CD8-positive, alpha-beta T cell (primary cell): ENCODE measurements at regions of chr3 and their contacts with region 1.

Region 1: GRCh38 chr3:138594150-138594934 is at the start of gene CEP70:
- DNase-seq: peak; percentile 83 to 96 (median 91)
- ATAC-seq: peak; percentile 93
- H3K4me3 ChIP-seq: peak within 1 kb of the TSS; percentile 83 to 93
- H3K4me3 Mint-ChIP-seq: peak within 1 kb of the TSS; percentile 94
- H3K27ac ChIP-seq: peak within 1 kb of the TSS; percentile 90 to 95
- H3K27ac Mint-ChIP-seq: peak within 1 kb of the TSS; percentile 99
- H3K4me1 ChIP-seq: no peaks in the 10 kb centered on the region
- H3K4me1 Mint-ChIP-seq: peaks cover 14% of the 10 kb centered on the region
- H3K27me3 ChIP-seq: no peaks in the 10 kb centered on the region
- H3K27me3 Mint-ChIP-seq: no peaks in the 10 kb centered on the region
- CTCF ChIP-seq: peak; percentile 86
- total RNA-seq, gene CEP70: 29.5 to 31.0 TPM

Region 2: GRCh38 chr3:138068579-138069174 is 525.7 kb before region 1 on chr3:
- CTCF ChIA-PET with region 1: no interaction called
- POLR2A ChIA-PET with region 1: no interaction called
- intact Hi-C with region 1: no loop called
- DNase-seq: peak; percentile 53 to 80 (median 68)
- ATAC-seq: peak; percentile 79
- H3K4me3 ChIP-seq: no peak overlapping the region
- H3K4me3 Mint-ChIP-seq: no peak overlapping the region
- H3K27ac ChIP-seq: no peak overlapping the region
- H3K27ac Mint-ChIP-seq: no peak overlapping the region
- H3K4me1 ChIP-seq: no peaks in the 10 kb centered on the region
- H3K4me1 Mint-ChIP-seq: no peaks in the 10 kb centered on the region
- H3K27me3 ChIP-seq: no peaks in the 10 kb centered on the region
- H3K27me3 Mint-ChIP-seq: peaks cover 9% of the 10 kb centered on the region
- CTCF ChIP-seq: peak; percentile 79

Region 3: GRCh38 chr3:138186803-138187295 is 407.5 kb before region 1 on chr3:
- CTCF ChIA-PET with region 1: no interaction called
- POLR2A ChIA-PET with region 1: interaction called, 4 read pairs
- intact Hi-C with region 1: loop called (anchors 2 to 5 kb)
- DNase-seq: peak; percentile 79 to 95 (median 89)
- ATAC-seq: peak; percentile 95
- H3K4me3 ChIP-seq: peak overlapping the region; percentile 94
- H3K4me3 Mint-ChIP-seq: peak overlapping the region; percentile 97
- H3K27ac ChIP-seq: peak overlapping the region; percentile 90 to 92
- H3K27ac Mint-ChIP-seq: peak overlapping the region; percentile 98
- H3K4me1 ChIP-seq: peaks cover 29% of the 10 kb centered on the region
- H3K4me1 Mint-ChIP-seq: peaks cover 40% of the 10 kb centered on the region
- H3K27me3 ChIP-seq: peaks cover 0 to 3% of the 10 kb centered on the region in 2 experiments
- H3K27me3 Mint-ChIP-seq: peaks cover 5% of the 10 kb centered on the region
- CTCF ChIP-seq: no peak

Region 4: GRCh38 chr3:138608322-138609135 is 14.2 kb after region 1 on chr3 and contains the start of gene FAIM:
- CTCF ChIA-PET with region 1: interaction called, 24 read pairs
- POLR2A ChIA-PET with region 1: interaction called, 32 read pairs
- intact Hi-C with region 1: loop called (anchors 1 kb)
- DNase-seq: peak; percentile 52 to 84 (median 70)
- ATAC-seq: peak; percentile 76
- H3K4me3 ChIP-seq: peak within 1 kb of the TSS; percentile 71 to 83
- H3K4me3 Mint-ChIP-seq: peak within 1 kb of the TSS; percentile 86
- H3K27ac ChIP-seq: peak within 1 kb of the TSS; percentile 84 to 86
- H3K27ac Mint-ChIP-seq: peak within 1 kb of the TSS; percentile 96
- H3K4me1 ChIP-seq: peaks cover 14% of the 10 kb centered on the region
- H3K4me1 Mint-ChIP-seq: peaks cover 15% of the 10 kb centered on the region
- H3K27me3 ChIP-seq: no peaks in the 10 kb centered on the region
- H3K27me3 Mint-ChIP-seq: no peaks in the 10 kb centered on the region
- CTCF ChIP-seq: no peak
- total RNA-seq, gene FAIM: 2.0 to 2.6 TPM

Region 5: DNA sequence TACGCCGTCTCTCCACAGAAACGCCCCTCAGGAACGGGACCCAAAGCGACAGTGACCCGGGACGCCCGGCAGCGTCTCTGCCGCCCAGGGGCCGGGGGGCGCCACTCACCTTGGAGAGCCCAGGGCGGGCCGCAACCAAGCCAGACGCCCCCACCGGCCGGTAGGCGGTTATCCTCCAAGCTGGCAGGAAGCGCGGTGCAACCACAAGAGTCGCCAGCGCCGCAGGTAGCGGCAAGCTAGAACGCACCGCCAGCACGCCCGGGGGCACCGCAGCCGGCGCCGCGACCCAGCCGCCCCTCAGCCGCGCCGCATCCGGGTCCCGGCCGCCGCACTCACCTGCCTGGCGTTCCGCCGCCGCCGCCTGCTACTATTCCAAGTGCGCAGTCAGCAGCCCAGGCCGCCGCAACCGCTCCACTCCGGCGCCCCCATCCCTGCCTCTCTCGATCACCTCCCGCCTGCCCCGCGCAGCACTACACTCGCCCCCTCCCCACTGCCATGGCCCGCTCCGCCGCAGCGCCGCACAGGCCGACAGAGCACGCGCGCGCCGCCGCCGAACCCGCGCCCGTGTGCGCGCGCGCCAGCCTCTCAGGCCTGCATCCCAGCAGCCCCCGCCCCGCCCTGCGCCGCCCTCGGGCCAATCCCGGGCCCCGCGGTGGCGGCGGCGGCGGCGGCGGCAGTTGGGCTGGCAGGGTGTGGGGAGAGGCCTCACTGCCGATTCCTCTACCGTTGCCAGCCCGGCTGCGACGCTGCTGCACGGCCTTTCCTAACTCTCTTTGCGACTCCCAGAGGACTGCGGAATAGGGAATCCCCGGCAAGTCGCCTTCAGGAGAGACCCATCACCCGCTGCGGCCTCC is 240.2 kb after region 1 on chr3 and contains the start of gene PIK3CB:
- CTCF ChIA-PET with region 1: no interaction called
- POLR2A ChIA-PET with region 1: interaction called, 6 read pairs
- intact Hi-C with region 1: loop called (anchors 1 to 2 kb)
- DNase-seq: peak; percentile 71 to 93 (median 87)
- ATAC-seq: peak; percentile 86
- H3K4me3 ChIP-seq: peak within 1 kb of the TSS; percentile 73 to 86
- H3K4me3 Mint-ChIP-seq: peak within 1 kb of the TSS; percentile 89
- H3K27ac ChIP-seq: peak within 1 kb of the TSS; percentile 68 to 87
- H3K27ac Mint-ChIP-seq: peak within 1 kb of the TSS; percentile 96
- H3K4me1 ChIP-seq: peaks cover 12% of the 10 kb centered on the region
- H3K4me1 Mint-ChIP-seq: peaks cover 28% of the 10 kb centered on the region
- H3K27me3 ChIP-seq: no peaks in the 10 kb centered on the region
- H3K27me3 Mint-ChIP-seq: no peaks in the 10 kb centered on the region
- CTCF ChIP-seq: no peak
- total RNA-seq, gene PIK3CB: 14.7 to 15.0 TPM

Region 6: DNA sequence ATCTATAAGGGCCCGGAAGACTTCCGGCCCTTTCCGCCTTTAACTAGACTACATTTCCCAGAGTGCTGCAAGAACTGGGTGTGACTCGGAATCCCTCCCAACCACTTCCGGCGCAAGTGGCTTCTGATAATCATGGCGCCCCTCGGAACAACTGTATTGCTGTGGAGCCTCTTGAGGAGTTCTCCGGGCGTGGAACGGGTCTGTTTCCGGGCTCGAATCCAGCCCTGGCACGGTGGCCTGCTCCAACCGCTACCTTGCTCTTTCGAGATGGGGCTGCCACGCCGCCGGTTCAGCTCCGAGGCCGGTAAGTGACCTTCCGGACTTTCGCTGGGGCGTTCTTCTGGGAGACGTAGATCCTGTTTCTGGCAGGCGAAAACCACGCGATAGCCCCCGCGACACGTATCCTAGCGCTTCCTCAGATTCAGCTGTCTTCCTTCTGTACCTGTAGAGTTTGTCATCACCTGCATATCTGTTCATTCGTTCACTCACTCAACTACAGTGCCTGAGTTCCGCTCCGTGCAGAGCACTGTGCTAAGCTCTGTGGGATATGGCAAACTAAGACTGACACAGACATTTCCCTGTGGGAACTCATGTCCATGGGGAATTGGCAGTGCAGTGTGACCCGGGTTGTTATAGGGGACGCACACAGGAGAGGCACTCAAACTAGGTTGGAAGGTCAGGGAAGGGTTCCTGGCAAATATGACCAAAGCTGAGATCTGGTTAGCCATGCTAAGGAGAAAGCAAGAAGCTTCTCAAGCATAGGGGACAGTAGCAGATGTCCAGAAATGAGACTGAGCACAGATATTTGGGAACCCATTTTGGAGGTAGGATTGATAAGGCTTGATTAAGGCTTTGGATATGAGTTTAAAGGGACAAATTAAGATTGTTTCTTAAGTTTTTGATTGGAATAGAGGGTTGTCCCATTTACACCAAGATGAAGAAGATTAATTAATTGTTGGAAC is 749.8 kb after region 1 on chr3 and contains the start of gene MRPS22:
- CTCF ChIA-PET with region 1: interaction called, 4 read pairs
- POLR2A ChIA-PET with region 1: no interaction called
- intact Hi-C with region 1: loop called (anchors 5 kb)
- DNase-seq: peak; percentile 58 to 92 (median 84)
- ATAC-seq: peak; percentile 97
- H3K4me3 ChIP-seq: peak within 1 kb of the TSS; percentile 84 to 99
- H3K4me3 Mint-ChIP-seq: peak within 1 kb of the TSS; percentile 72
- H3K27ac ChIP-seq: peak within 1 kb of the TSS; percentile 70 to 92
- H3K27ac Mint-ChIP-seq: peak within 1 kb of the TSS; percentile 86
- H3K4me1 ChIP-seq: peaks cover 15% of the 10 kb centered on the region
- H3K4me1 Mint-ChIP-seq: peaks cover 11% of the 10 kb centered on the region
- H3K27me3 ChIP-seq: no peaks in the 10 kb centered on the region
- H3K27me3 Mint-ChIP-seq: peaks cover 5% of the 10 kb centered on the region
- CTCF ChIP-seq: no peak
- total RNA-seq, gene MRPS22: 55.4 to 57.6 TPM